Psoas muscle (tissue), 8 donors: ENCODE measurements at regions of chr6 and their contacts with region 1.

Region 1: GRCh38 chr6:87701676-87702588 is at the start of gene AKIRIN2:
- DNase-seq: peak; percentile 95 to 97
- ATAC-seq: peak; percentile 85 to 88 (median 88)
- H3K4me3 ChIP-seq: peak within 1 kb of the TSS; percentile 93
- H3K27ac ChIP-seq: peak within 1 kb of the TSS; percentile 99
- H3K4me1 ChIP-seq: peaks cover 9% of the 10 kb centered on the region
- H3K27me3 ChIP-seq: no peaks in the 10 kb centered on the region
- CTCF ChIP-seq: no peak
- total RNA-seq, gene AKIRIN2: 71.9 to 188 (median 141) TPM

Region 2: DNA sequence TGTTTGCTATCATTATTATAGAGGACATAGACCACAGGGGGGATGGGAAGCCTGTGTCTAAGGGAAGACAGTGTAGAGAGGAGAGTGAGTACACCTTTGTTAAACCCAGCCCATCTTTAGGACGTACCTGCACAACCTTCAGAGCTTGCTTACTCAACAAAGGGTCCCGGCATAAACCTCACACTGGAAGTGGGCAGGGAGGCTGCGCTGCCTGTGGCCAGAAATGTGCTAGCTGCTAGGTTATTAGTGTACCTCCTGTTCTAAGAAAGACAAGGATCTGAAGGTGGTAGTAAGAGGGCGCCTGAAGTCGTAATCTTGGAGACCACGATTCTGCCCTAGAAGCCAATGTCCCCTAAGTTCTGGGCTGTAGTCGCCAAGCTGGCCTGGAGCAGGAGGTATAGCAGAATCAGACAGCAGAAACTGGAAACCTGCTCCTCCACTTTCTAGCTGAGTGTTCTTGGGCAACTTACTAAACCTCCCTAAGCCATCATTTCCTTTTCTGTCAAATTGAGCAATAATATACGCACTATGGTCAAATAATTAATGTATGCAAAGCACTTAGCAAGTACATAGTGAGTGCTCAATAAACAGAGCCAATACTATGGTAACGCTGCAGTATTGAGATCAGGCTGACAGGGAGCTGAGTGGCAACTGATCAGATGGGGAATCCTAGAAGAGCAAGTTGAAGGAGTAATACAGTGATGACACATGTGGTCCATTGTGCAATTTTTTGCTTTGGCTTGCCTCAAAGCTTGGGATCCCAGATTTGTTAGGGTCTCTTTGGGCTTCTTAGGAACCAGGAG is 16.9 kb after region 1 on chr6:
- intact Hi-C with region 1: loop called in 1 of 2 experiments (anchors 2 kb)
- DNase-seq: no peak
- ATAC-seq: peak in 1 of 4 donors; percentile 45
- H3K4me3 ChIP-seq: no peak overlapping the region
- H3K27ac ChIP-seq: peak overlapping the region; percentile 47
- H3K4me1 ChIP-seq: peaks cover 20% of the 10 kb centered on the region
- H3K27me3 ChIP-seq: no peaks in the 10 kb centered on the region
- CTCF ChIP-seq: no peak

Region 3: GRCh38 chr6:87731818-87732661 is 30.1 kb after region 1 on chr6:
- intact Hi-C with region 1: loop called in 1 of 2 experiments (anchors 2 kb)
- DNase-seq: peak; percentile 95 to 96
- ATAC-seq: peak; percentile 81 to 90 (median 87)
- H3K4me3 ChIP-seq: peak overlapping the region; percentile 24
- H3K27ac ChIP-seq: peak overlapping the region; percentile 90
- H3K4me1 ChIP-seq: peaks cover 43% of the 10 kb centered on the region
- H3K27me3 ChIP-seq: no peaks in the 10 kb centered on the region
- CTCF ChIP-seq: no peak